ENCODE measurements at regions of chr12 and their contacts with region 1.

Region 1: DNA sequence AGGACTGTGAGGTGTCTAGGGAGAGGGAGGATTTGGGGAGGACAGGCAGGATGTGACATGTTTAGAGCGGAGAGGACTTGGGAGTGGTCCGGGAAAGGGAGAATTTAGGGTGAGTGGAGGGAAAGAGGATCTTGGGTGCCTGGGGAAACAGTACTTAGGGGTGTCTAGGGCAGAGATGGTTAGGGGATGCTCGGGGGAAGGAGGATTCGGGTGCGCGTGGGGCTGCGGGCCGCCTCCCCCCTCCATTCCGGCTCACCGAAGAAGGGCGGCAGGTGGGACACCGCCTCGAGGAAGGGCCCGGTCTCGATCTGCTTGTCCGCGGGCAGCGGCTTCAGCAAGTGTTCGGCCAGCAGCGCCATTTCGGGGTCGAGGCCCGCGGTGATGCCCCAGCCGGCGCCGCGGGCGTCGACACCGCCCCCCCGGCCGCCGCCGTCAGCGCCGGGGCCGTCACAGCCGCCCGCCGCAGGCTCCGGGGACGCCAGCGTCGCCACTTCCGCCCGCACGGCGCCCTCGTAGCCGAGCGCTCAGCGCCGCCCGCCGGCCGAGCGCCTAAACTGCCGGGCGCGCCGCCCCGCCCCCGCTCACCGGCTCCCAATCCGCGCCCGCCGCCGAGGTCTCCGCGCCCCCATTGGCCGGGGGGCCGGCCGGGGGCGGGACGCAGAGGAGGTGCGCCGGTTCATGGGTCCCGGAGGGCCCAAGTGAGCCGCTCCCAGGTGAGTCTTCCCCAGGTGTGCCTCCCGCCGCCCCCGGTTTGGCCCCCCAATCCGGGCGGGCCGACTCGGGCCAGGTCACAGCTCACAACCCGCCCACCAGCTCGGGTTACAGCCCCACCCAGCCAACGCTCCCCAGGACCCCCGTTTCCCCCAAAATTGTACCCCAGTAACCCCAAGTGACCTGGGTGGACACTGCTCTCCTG is at the start of gene GLTP:
- DNase-seq: peak; percentile 96
- H3K4me3 Mint-ChIP-seq: peak within 1 kb of the TSS; percentile 85
- H3K27ac Mint-ChIP-seq: peak within 1 kb of the TSS; percentile 91
- H3K4me1 Mint-ChIP-seq: peaks cover 20% of the 10 kb centered on the region
- H3K27me3 Mint-ChIP-seq: peaks cover 20% of the 10 kb centered on the region
- CTCF ChIP-seq: peak; percentile 52
- total RNA-seq, gene GLTP: 25.7 and 27.7 TPM in 2 replicates

Region 2: GRCh38 chr12:109653890-109654289 is 226.4 kb before region 1 on chr12:
- CTCF ChIA-PET with region 1: no interaction called
- intact Hi-C with region 1: no loop called
- DNase-seq: no peak
- H3K4me3 Mint-ChIP-seq: no peak overlapping the region
- H3K27ac Mint-ChIP-seq: no peak overlapping the region
- H3K4me1 Mint-ChIP-seq: no peaks in the 10 kb centered on the region
- H3K27me3 Mint-ChIP-seq: peaks cover 23% of the 10 kb centered on the region
- CTCF ChIP-seq: no peak

Region 3: DNA sequence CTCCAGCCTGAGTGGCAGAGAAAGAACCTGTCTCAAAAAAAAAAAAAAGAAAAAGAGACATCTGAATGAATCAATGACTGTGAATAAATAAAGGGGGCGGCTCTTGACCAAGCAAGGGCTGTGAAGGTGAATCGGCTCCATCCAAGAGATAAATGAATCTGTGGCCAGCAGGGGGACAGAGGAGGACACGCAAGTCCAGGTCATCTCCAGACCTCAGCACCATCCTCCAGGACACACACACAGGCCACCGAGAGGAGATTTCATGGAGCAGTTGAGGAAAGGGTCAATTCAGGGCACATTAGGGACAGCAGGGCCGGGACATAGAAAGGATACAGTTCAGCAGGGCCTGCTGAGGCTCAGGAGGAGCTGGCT is 68.7 kb before region 1 on chr12:
- CTCF ChIA-PET with region 1: no interaction called
- intact Hi-C with region 1: no loop called
- DNase-seq: no peak
- H3K4me3 Mint-ChIP-seq: no peak overlapping the region
- H3K27ac Mint-ChIP-seq: no peak overlapping the region
- H3K4me1 Mint-ChIP-seq: no peaks in the 10 kb centered on the region
- H3K27me3 Mint-ChIP-seq: no peaks in the 10 kb centered on the region
- CTCF ChIP-seq: peak; percentile 26

Region 4: GRCh38 chr12:109858764-109859163 is 21.5 kb before region 1 on chr12:
- CTCF ChIA-PET with region 1: no interaction called
- intact Hi-C with region 1: loop called (anchors 1 kb)
- DNase-seq: no peak
- H3K4me3 Mint-ChIP-seq: no peak overlapping the region
- H3K27ac Mint-ChIP-seq: no peak overlapping the region
- H3K4me1 Mint-ChIP-seq: no peaks in the 10 kb centered on the region
- H3K27me3 Mint-ChIP-seq: no peaks in the 10 kb centered on the region
- CTCF ChIP-seq: no peak

Measured in Calu3 (cell line).